ENCODE measurements at regions of chr10 and their contacts with region 1.

Region 1: DNA sequence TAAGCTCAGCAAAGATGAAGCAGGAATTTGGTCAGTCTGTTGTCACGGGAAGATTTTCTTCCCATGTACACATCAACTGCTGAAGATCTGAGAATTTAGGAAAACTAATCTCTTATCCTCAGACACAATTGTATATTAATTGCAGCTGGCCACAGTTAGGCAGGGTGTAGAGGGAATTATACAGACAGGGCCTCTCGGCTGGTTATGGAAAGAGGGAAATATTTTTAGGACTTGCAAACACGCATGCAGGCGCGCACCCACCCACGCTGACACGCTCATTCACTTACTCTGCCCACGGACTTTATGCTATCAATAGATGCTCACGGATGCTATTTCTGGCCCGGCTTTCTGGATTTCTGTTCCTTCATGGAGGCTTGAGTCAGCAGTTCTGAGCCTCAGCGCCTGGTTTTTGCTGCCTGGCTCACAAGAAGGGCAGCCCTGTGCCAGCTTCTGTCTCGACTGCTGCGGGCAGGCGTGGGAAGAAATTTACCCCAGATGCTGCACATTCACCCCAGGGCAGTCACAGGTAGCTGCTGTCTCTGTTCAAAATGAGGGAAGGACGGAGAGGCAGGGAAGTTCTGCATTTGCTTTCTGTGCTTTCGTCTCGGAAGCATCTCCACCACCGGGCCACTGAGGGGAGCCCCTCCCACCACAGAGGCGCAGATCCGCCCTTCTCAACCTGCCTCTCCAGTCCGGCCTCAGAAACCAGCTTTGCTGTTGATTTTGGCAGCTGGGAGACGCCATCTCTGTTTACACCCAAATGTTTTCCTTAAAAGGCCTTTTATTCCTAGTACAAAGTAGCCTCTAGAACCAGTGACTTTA is 116.3 kb upstream of the BTBD16 start:
- DNase-seq: peak in 4 of 5 donors; percentile 55 to 68 (median 61)
- ATAC-seq: peak in 3 of 4 donors; percentile 2 to 42 (median 41)
- H3K4me3 ChIP-seq: peak overlapping the region in 1 of 12 donors; percentile 3
- H3K27ac ChIP-seq: peak overlapping the region in 11 of 12 donors; percentile 2 to 87 (median 57)
- H3K4me1 ChIP-seq: peaks cover 6 to 80% (median 53%) of the 10 kb centered on the region in 12 donors
- H3K27me3 ChIP-seq: no peaks in the 10 kb centered on the region
- CTCF ChIP-seq: peak in 2 of 12 donors; percentile 13 to 16
- POLR2A ChIP-seq: no peak

Region 2: DNA sequence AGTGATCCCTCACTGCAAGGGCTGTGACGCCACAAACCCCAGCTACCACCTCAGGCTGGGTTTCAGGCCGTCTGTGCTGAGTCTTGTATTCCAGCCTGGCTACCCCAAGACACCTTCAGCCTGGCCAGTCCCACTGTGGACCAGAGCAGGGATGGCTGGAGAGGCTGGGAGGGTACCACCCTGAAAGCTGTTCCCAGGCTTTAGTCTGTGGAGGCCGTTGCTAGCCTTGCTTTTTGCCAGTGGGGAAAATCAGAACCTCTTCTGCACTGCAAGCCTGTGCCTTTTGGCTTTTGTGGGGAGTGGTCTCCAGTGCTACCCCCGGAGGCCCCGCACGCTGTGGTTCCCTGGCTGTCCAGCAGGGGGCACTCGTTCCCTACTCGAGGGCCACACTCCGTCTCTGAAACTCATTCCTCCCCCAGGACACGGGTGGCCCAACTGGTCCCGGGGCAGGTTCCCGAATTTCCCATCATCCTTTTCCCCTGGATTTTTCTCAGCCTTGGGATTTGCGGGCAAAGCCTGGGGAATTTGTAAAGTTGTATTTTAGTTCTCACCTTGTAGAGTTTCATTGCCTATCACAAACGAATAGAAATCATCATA is 12.0 kb before region 1 on chr10:
- intact Hi-C with region 1: no loop called
- DNase-seq: peak in 1 of 5 donors; percentile 53
- ATAC-seq: no peak
- H3K4me3 ChIP-seq: no peak overlapping the region
- H3K27ac ChIP-seq: peak overlapping the region; percentile 14 to 94 (median 87)
- H3K4me1 ChIP-seq: peaks cover 27 to 85% (median 68%) of the 10 kb centered on the region in 12 donors
- H3K27me3 ChIP-seq: no peaks in the 10 kb centered on the region
- CTCF ChIP-seq: peak; percentile 87 to 99 (median 94)
- POLR2A ChIP-seq: no peak

Region 3: GRCh38 chr10:122191936-122192541 is 37.3 kb after region 1 on chr10:
- intact Hi-C with region 1: loop called in 1 of 10 experiments (anchors 5 kb)
- DNase-seq: peak in 3 of 5 donors; percentile 38 to 56 (median 51)
- ATAC-seq: peak; percentile 15 to 77 (median 73)
- H3K4me3 ChIP-seq: no peak overlapping the region
- H3K27ac ChIP-seq: peak overlapping the region in 7 of 12 donors; percentile 10 to 62 (median 23)
- H3K4me1 ChIP-seq: peaks cover 0 to 73% (median 27%) of the 10 kb centered on the region in 12 donors
- H3K27me3 ChIP-seq: no peaks in the 10 kb centered on the region
- CTCF ChIP-seq: no peak
- POLR2A ChIP-seq: no peak

Region 4: GRCh38 chr10:122207596-122207995 is 52.8 kb after region 1 on chr10:
- intact Hi-C with region 1: loop called in 1 of 10 experiments (anchors 5 kb)
- DNase-seq: no peak
- ATAC-seq: peak in 3 of 4 donors; percentile 57 to 65 (median 62)
- H3K4me3 ChIP-seq: no peak overlapping the region
- H3K27ac ChIP-seq: peak overlapping the region in 2 of 12 donors; percentile 29 to 31
- H3K4me1 ChIP-seq: peaks cover 0 to 48% (median 9%) of the 10 kb centered on the region in 12 donors
- H3K27me3 ChIP-seq: no peaks in the 10 kb centered on the region
- CTCF ChIP-seq: no peak
- POLR2A ChIP-seq: no peak